ENCODE measurements at regions of chr12 and their contacts with region 1.

Region 1: DNA sequence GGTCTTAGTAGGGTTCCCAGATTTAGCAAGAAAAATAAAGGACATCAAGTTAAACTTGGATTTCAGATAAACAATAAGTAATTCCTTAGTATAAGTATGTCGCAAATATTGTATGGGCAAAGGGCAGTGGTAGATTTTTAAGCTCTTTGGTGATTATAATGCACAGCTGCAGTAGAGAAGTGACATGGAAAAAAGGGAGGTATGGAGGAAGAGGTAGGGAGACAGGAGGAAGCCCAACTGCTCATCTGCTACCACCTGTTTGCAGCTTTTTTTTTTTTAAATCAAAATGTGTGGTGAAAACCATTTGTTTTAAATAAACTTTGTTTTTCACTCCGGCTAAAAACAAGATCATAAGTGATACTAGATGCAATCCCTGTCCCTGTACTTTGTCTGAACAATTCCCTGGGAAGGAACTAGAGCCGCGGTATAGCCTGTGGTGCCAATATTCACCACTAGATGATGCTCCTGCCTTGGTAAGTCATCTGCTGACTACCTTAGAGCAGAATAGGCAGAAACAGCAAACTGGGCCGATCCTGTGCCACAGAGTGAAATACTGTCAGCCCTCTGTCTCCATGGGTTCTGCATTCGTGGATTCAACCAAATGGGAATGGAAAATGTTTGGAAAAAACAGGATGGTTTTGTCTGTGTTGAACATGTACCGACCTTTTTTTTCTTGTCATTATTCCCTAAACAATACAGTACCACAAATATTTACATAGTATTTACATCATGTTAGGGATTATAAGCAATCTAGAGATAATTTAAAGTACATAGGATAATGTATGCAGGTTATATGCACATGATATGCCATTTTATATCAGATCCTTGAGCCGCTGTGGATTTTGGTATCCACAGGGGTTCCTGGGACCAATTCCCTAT is 62.4 kb upstream of the PLBD1 start:
- DNase-seq: peak; percentile 77
- ATAC-seq: peak; percentile 100
- H3K4me3 ChIP-seq: no peak overlapping the region
- H3K4me3 Mint-ChIP-seq: no peak overlapping the region
- H3K27ac ChIP-seq: no peak overlapping the region
- H3K27ac Mint-ChIP-seq: no peak overlapping the region
- H3K4me1 ChIP-seq: no peaks in the 10 kb centered on the region
- H3K4me1 Mint-ChIP-seq: no peaks in the 10 kb centered on the region
- H3K27me3 ChIP-seq: no peaks in the 10 kb centered on the region
- H3K27me3 Mint-ChIP-seq: no peaks in the 10 kb centered on the region
- CTCF ChIP-seq: peak; percentile 98

Region 2: DNA sequence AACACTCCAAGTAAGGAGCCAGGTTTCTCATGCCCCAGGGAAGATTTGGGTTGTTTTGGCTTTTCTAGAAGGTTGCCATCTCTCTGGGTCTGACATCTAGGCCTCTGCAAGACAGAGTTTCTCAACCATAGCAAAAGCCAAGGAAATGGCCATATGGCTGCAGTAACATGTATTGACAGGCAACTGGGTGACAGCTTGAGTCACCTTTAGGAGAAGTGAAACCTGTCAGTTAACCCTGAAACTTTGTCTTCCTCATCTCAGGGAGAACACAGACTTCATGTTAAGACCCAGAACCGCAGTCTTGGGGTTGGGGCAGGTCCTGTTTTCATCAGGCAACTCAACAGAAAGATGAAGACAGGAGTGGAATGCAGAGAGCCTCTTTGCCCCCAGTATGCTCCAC is 16.4 kb before region 1 on chr12:
- CTCF ChIA-PET with region 1: interaction called, 23 read pairs
- POLR2A ChIA-PET with region 1: no interaction called
- intact Hi-C with region 1: no loop called
- DNase-seq: peak; percentile 88
- ATAC-seq: peak; percentile 82
- H3K4me3 ChIP-seq: peak overlapping the region in 3 of 5 experiments; percentile 23 to 60 (median 54)
- H3K4me3 Mint-ChIP-seq: peak overlapping the region; percentile 80
- H3K27ac ChIP-seq: peak overlapping the region; percentile 73 to 81
- H3K27ac Mint-ChIP-seq: peak overlapping the region; percentile 92
- H3K4me1 ChIP-seq: peaks cover 28 to 36% of the 10 kb centered on the region in 2 donors
- H3K4me1 Mint-ChIP-seq: peaks cover 34% of the 10 kb centered on the region
- H3K27me3 ChIP-seq: no peaks in the 10 kb centered on the region
- H3K27me3 Mint-ChIP-seq: no peaks in the 10 kb centered on the region
- CTCF ChIP-seq: no peak

Region 3: DNA sequence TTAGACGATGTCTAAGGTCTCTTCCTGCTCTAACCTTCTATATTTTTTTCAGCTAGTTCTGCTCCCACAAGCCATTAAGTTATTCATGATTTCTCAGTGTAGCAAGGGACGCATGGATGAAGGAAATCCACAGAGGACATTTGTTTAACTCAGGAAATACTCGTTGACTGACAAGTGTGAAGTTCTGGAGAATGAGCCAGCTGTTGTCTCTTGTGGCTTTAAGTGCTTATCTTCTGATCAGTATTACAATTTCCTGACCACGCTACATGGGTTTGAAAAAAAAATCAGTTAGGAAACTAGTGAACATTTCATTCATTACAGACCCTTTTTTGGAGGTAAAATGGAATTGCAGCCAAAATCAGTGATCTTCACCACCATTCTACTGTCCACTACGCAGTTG is 13.2 kb after region 1 on chr12:
- CTCF ChIA-PET with region 1: interaction called, 10 read pairs
- POLR2A ChIA-PET with region 1: no interaction called
- intact Hi-C with region 1: no loop called
- DNase-seq: no peak
- ATAC-seq: no peak
- H3K4me3 ChIP-seq: no peak overlapping the region
- H3K4me3 Mint-ChIP-seq: peak overlapping the region; percentile 70
- H3K27ac ChIP-seq: no peak overlapping the region
- H3K27ac Mint-ChIP-seq: no peak overlapping the region
- H3K4me1 ChIP-seq: peaks cover 15 to 17% of the 10 kb centered on the region in 2 donors
- H3K4me1 Mint-ChIP-seq: peaks cover 16% of the 10 kb centered on the region
- H3K27me3 ChIP-seq: no peaks in the 10 kb centered on the region
- H3K27me3 Mint-ChIP-seq: peaks cover 5% of the 10 kb centered on the region
- CTCF ChIP-seq: no peak

Region 4: DNA sequence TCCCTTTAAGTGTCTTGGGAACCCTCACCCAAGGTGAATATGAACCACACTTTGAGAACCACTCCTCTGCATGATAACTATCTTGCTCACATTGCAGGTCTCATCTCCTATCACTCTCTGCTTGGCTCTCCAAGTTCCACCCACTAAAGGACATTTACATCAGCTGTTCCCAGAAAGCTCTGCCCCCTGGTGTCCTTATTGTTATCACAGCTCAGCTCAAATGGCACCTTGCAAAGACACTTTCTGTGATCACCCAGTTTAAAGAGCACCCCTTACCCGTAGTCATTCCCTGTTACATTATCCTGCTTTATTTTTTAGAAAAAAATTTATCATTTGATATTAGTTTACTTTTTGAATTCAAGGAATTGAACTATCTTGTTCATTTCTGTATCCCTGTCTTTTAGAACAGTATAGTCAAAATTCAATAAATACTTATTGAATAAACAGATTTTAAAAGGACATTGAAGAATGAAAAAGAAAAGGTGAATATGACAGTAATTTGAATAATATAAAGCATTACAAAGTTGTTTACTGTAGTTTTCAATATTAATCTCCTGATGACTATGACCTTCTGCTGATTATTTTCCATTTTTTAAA is 86.9 kb after region 1 on chr12:
- CTCF ChIA-PET with region 1: interaction called, 58 read pairs
- POLR2A ChIA-PET with region 1: no interaction called
- intact Hi-C with region 1: loop called (anchors 1 kb)
- DNase-seq: peak; percentile 72
- ATAC-seq: peak; percentile 69
- H3K4me3 ChIP-seq: no peak overlapping the region
- H3K4me3 Mint-ChIP-seq: no peak overlapping the region
- H3K27ac ChIP-seq: no peak overlapping the region
- H3K27ac Mint-ChIP-seq: no peak overlapping the region
- H3K4me1 ChIP-seq: no peaks in the 10 kb centered on the region
- H3K4me1 Mint-ChIP-seq: no peaks in the 10 kb centered on the region
- H3K27me3 ChIP-seq: no peaks in the 10 kb centered on the region
- H3K27me3 Mint-ChIP-seq: peaks cover 9% of the 10 kb centered on the region
- CTCF ChIP-seq: peak; percentile 71

Region 5: DNA sequence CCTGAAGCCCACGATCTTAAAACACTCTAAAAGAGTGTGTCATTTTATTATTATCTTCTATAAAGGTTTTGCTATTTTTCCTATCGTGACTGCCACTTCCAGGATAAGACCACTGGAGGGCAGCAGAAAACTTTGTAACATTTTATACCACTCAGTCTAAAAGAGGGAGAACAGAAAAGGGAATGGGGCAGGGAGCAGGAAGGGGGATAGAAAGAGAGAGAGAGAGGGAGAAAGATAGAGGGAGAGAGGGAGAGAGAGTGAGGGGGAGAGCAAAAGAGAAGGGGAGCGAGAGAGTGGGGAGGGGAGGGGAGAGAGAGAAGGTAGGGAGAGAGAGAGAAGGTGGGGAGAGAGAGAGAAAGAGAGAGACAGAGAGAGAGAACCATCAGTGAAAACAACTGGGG is 215.3 kb after region 1 on chr12:
- CTCF ChIA-PET with region 1: no interaction called
- POLR2A ChIA-PET with region 1: no interaction called
- intact Hi-C with region 1: no loop called
- DNase-seq: peak; percentile 72
- ATAC-seq: peak; percentile 81
- H3K4me3 ChIP-seq: no peak overlapping the region
- H3K4me3 Mint-ChIP-seq: no peak overlapping the region
- H3K27ac ChIP-seq: no peak overlapping the region
- H3K27ac Mint-ChIP-seq: no peak overlapping the region
- H3K4me1 ChIP-seq: peaks cover 0 to 4% of the 10 kb centered on the region in 2 donors
- H3K4me1 Mint-ChIP-seq: peaks cover 9% of the 10 kb centered on the region
- H3K27me3 ChIP-seq: no peaks in the 10 kb centered on the region
- H3K27me3 Mint-ChIP-seq: no peaks in the 10 kb centered on the region
- CTCF ChIP-seq: peak; percentile 77

Region 6: DNA sequence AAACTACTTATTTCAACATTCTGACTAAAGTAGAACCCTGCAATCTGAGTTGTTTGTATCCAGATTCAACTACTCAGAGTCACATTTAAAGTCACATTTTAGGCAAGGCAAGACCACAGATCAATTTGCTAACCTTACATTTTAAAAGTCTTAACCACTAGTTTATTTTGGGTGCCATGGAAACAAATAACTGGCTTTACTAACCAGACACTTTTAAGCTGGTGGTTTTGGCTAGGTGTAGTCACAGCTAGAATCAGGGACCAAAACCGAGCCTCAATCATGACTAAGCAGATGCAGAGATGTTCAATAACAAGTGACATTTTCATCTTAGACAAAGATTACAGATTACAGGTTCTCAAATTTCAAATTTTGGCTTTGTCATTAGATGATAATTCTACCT is 458.0 kb after region 1 on chr12:
- CTCF ChIA-PET with region 1: no interaction called
- POLR2A ChIA-PET with region 1: no interaction called
- intact Hi-C with region 1: no loop called
- DNase-seq: no peak
- ATAC-seq: no peak
- H3K4me3 ChIP-seq: no peak overlapping the region
- H3K4me3 Mint-ChIP-seq: no peak overlapping the region
- H3K27ac ChIP-seq: no peak overlapping the region
- H3K27ac Mint-ChIP-seq: no peak overlapping the region
- H3K4me1 ChIP-seq: no peaks in the 10 kb centered on the region
- H3K4me1 Mint-ChIP-seq: no peaks in the 10 kb centered on the region
- H3K27me3 ChIP-seq: peaks cover 0 to 3% (median 0%) of the 10 kb centered on the region in 4 experiments
- H3K27me3 Mint-ChIP-seq: peaks cover 21% of the 10 kb centered on the region
- CTCF ChIP-seq: no peak

Region 7: DNA sequence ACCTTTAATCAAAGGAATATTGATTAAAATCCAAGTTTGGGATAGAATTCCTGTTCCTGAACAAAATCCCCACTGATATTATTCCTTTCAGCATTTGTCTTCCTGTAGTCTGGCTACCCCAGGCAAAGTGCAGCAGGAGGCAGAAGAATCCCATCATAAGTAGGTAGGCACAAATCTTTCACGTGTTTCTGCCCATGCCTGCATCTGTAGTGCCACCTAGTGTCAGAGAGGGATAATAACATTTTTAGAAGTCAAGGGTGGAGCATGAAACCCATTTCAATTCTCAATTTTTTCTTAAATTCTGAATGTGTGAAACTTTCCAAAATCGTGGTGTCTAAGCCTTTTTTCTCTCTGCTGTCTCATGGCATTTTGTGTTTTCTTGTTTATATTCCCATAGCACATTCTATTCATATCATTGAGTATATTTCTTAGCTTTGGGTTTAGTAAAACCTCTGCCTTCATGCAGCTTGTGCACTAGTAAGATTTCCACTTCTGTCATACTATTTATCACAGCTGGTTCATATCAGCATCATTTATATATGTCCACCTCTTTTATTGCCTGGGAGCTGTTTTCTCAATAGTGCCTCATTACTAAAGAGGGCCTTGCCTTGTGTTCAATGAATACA is 639.0 kb after region 1 on chr12:
- CTCF ChIA-PET with region 1: no interaction called
- POLR2A ChIA-PET with region 1: no interaction called
- intact Hi-C with region 1: loop called (anchors 1 kb)
- DNase-seq: peak; percentile 63
- ATAC-seq: peak; percentile 71
- H3K4me3 ChIP-seq: no peak overlapping the region
- H3K4me3 Mint-ChIP-seq: no peak overlapping the region
- H3K27ac ChIP-seq: no peak overlapping the region
- H3K27ac Mint-ChIP-seq: no peak overlapping the region
- H3K4me1 ChIP-seq: no peaks in the 10 kb centered on the region
- H3K4me1 Mint-ChIP-seq: no peaks in the 10 kb centered on the region
- H3K27me3 ChIP-seq: no peaks in the 10 kb centered on the region
- H3K27me3 Mint-ChIP-seq: peaks cover 3% of the 10 kb centered on the region
- CTCF ChIP-seq: peak; percentile 97

Measured in B cell (primary cell).